Naive thymus-derived CD8-positive, alpha-beta T cell (primary cell): ENCODE measurements at regions of chr6 and their contacts with region 1.

Region 1: DNA sequence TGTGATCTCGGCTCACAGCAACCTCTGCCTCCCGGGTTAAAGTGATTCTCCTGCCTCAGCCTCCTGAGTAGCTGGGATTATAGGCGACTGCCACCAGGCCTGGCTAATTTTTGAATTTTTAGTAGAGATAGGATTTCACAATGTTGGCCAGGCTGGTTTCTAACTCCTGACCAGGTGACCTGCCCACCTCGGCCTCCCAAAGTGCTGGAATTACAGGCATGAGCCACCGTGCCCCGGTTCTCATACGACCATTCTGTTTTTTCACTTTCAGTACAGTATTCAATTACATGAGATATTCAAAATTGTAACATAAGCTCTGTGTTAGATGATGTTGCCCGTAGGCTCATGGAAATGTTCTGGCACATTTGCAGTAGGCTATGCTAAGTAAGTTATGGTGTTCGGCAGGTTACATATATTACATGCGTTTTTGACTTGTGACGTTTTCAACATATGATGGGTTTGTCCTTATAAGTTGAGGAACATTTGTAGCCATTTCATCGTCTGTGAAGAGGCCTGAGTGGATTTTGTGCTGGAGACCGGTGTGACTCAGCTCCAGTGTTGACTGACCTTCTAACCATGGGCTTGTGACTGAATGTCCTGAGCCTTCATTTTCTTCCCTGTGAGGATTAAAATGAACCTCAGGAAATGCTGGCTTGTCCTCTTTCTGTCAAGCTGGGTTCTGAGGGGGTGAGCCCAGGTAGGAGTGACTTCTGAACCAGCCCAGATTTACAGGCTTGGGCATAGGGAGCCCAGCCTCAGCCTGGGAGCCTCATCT is 12.2 kb downstream of the PPARD start:
- DNase-seq: no peak
- ATAC-seq: no peak
- H3K4me3 Mint-ChIP-seq: no peak overlapping the region
- H3K27ac Mint-ChIP-seq: peak overlapping the region in 5 of 10 donors; percentile 9 to 56 (median 35)
- H3K4me1 Mint-ChIP-seq: peaks cover 37 to 83% (median 71%) of the 10 kb centered on the region in 4 donors
- H3K27me3 Mint-ChIP-seq: no peaks in the 10 kb centered on the region

Region 2: GRCh38 chr6:35051396-35051795 is 303.2 kb before region 1 on chr6:
- POLR2A ChIA-PET with region 1: interaction called, 12 read pairs
- DNase-seq: no peak
- ATAC-seq: no peak
- H3K4me3 Mint-ChIP-seq: no peak overlapping the region
- H3K27ac Mint-ChIP-seq: no peak overlapping the region
- H3K4me1 Mint-ChIP-seq: peaks cover 0 to 18% (median 6%) of the 10 kb centered on the region in 4 donors
- H3K27me3 Mint-ChIP-seq: no peaks in the 10 kb centered on the region

Region 3: DNA sequence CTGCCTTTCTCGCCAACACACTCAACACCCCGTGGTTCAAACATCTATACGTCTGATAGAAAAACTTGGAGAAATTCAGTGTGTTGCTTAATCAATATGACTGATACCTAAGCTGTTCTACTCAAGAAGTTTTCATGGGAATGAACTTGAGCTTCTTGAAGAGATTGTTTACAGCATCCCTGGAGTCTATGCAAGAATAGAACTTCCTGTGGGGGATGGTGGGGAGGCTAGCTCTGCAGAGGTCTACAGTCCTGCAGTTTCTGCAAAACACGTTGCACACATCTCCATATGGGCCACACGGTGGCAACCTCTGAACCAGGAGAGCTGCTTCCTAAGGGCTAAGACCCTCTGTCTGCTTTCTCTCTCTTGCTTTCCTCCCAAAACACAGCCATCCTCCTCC is 64.9 kb after region 1 on chr6:
- POLR2A ChIA-PET with region 1: interaction called, 10 read pairs
- DNase-seq: peak in 4 of 10 donors; percentile 8 to 36 (median 20)
- ATAC-seq: peak; percentile 77 to 80
- H3K4me3 Mint-ChIP-seq: peak overlapping the region in 8 of 10 donors; percentile 6 to 67 (median 40)
- H3K27ac Mint-ChIP-seq: peak overlapping the region in 9 of 10 donors; percentile 67 to 88 (median 84)
- H3K4me1 Mint-ChIP-seq: peaks cover 23 to 50% (median 38%) of the 10 kb centered on the region in 4 donors
- H3K27me3 Mint-ChIP-seq: no peaks in the 10 kb centered on the region